Natural killer cell (primary cell): ENCODE measurements at regions of chr9 and their contacts with region 1.

Region 1: GRCh38 chr9:5843794-5844504 is 11.0 kb upstream of the ERMP1 start:
- DNase-seq: peak in 1 of 2 donors; percentile 31
- ATAC-seq: peak in 1 of 3 donors; percentile 27
- H3K4me3 ChIP-seq: no peak overlapping the region
- H3K4me3 Mint-ChIP-seq: peak overlapping the region; percentile 79
- H3K27ac ChIP-seq: peak overlapping the region; percentile 54
- H3K27ac Mint-ChIP-seq: peak overlapping the region; percentile 91
- H3K4me1 ChIP-seq: peaks cover 73% of the 10 kb centered on the region
- H3K4me1 Mint-ChIP-seq: peaks cover 78 to 85% of the 10 kb centered on the region in 2 donors
- H3K27me3 ChIP-seq: no peaks in the 10 kb centered on the region
- H3K27me3 Mint-ChIP-seq: no peaks in the 10 kb centered on the region
- CTCF ChIP-seq: no peak

Region 2: DNA sequence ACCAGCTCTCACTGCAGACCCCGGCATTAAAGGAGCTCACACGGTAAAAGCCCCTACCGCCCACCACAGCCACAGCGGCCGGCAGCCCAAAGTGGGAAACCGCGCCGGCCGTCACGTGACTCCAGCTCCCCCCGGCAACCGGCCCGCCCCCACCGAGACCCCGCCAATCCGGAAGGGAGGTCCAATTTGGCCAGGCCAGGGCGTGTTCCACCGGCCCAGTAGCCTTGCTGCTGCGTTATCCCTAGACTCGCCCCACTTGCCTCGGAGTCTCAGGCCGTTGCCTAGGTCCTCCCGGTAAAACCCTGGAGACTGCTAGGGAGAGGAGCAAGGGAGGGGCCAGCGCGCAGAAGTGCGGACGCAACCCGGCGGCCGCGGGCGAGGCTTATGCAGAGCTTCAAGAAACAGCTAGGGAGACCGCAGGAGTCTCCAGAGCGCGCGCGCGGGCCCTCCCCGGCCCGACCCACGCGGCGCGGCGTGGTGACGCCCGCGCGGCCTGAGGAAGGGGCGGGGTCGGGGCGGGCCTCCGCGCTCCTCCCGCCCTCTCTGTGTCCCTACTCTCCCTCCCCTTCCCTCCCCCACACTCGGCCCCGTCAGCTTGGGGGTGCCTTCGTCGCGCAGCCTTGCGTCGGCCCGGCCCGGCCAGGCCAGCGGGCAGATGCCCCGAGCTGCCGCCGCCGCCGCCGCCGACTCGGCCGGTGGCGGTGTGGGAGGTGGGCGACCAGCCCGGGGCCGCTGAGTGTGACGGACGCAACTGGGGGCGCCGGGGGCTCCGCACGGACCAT is 215.2 kb before region 1 on chr9 and contains the start of gene RIC1:
- intact Hi-C with region 1: loop called (anchors 5 kb)
- DNase-seq: peak; percentile 89 to 94
- ATAC-seq: peak; percentile 87 to 97 (median 88)
- H3K4me3 ChIP-seq: peak within 1 kb of the TSS; percentile 99
- H3K4me3 Mint-ChIP-seq: peak within 1 kb of the TSS; percentile 99
- H3K27ac ChIP-seq: peak within 1 kb of the TSS; percentile 92
- H3K27ac Mint-ChIP-seq: peak within 1 kb of the TSS; percentile 93
- H3K4me1 ChIP-seq: peaks cover 27% of the 10 kb centered on the region
- H3K4me1 Mint-ChIP-seq: peaks cover 49 to 57% of the 10 kb centered on the region in 2 donors
- H3K27me3 ChIP-seq: no peaks in the 10 kb centered on the region
- H3K27me3 Mint-ChIP-seq: no peaks in the 10 kb centered on the region
- CTCF ChIP-seq: no peak
- total RNA-seq, gene RIC1: 23.5 to 33.9 (median 31.8) TPM

Region 3: GRCh38 chr9:5773324-5773999 is 70.5 kb before region 1 on chr9:
- intact Hi-C with region 1: no loop called
- DNase-seq: peak in 1 of 2 donors; percentile 9
- ATAC-seq: no peak
- H3K4me3 ChIP-seq: no peak overlapping the region
- H3K4me3 Mint-ChIP-seq: no peak overlapping the region
- H3K27ac ChIP-seq: no peak overlapping the region
- H3K27ac Mint-ChIP-seq: peak overlapping the region; percentile 2 to 10
- H3K4me1 ChIP-seq: no peaks in the 10 kb centered on the region
- H3K4me1 Mint-ChIP-seq: peaks cover 4 to 14% of the 10 kb centered on the region in 2 donors
- H3K27me3 ChIP-seq: no peaks in the 10 kb centered on the region
- H3K27me3 Mint-ChIP-seq: no peaks in the 10 kb centered on the region
- CTCF ChIP-seq: no peak

Region 4: GRCh38 chr9:5879419-5880181 is 35.7 kb after region 1 on chr9:
- intact Hi-C with region 1: loop called (anchors 5 kb)
- DNase-seq: no peak
- ATAC-seq: peak in 1 of 3 donors; percentile 50
- H3K4me3 ChIP-seq: no peak overlapping the region
- H3K4me3 Mint-ChIP-seq: no peak overlapping the region
- H3K27ac ChIP-seq: no peak overlapping the region
- H3K27ac Mint-ChIP-seq: no peak overlapping the region
- H3K4me1 ChIP-seq: peaks cover 17% of the 10 kb centered on the region
- H3K4me1 Mint-ChIP-seq: peaks cover 25 to 28% of the 10 kb centered on the region in 2 donors
- H3K27me3 ChIP-seq: no peaks in the 10 kb centered on the region
- H3K27me3 Mint-ChIP-seq: no peaks in the 10 kb centered on the region
- CTCF ChIP-seq: no peak

Region 5: DNA sequence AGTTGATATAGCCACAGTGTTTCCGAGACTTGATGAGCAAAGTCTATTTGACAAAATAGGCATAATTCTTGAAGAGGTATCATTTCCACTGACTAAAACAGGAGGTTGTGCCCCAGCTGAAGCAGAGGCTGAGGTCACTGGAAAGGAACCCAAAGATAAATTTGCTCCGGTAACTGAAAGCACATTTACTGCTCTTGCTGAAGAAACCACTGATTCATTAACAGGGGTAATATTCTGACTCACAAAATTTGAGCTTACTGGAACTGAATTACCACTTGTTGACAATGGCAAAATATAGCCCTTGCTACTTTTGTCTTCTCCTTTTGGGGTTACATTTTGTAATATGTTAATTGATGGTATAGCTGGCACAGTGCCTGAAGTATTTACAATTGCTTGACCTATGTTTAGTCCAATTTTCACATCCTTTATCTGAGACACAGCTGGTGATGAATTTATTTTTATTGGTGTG is 76.9 kb after region 1 on chr9:
- intact Hi-C with region 1: loop called (anchors 5 kb)
- DNase-seq: no peak
- ATAC-seq: peak in 1 of 3 donors; percentile 25
- H3K4me3 ChIP-seq: no peak overlapping the region
- H3K4me3 Mint-ChIP-seq: peak overlapping the region; percentile 73
- H3K27ac ChIP-seq: no peak overlapping the region
- H3K27ac Mint-ChIP-seq: peak overlapping the region; percentile 77 to 81
- H3K4me1 ChIP-seq: peaks cover 19% of the 10 kb centered on the region
- H3K4me1 Mint-ChIP-seq: peaks cover 45 to 46% of the 10 kb centered on the region in 2 donors
- H3K27me3 ChIP-seq: no peaks in the 10 kb centered on the region
- H3K27me3 Mint-ChIP-seq: no peaks in the 10 kb centered on the region
- CTCF ChIP-seq: no peak

Region 6: DNA sequence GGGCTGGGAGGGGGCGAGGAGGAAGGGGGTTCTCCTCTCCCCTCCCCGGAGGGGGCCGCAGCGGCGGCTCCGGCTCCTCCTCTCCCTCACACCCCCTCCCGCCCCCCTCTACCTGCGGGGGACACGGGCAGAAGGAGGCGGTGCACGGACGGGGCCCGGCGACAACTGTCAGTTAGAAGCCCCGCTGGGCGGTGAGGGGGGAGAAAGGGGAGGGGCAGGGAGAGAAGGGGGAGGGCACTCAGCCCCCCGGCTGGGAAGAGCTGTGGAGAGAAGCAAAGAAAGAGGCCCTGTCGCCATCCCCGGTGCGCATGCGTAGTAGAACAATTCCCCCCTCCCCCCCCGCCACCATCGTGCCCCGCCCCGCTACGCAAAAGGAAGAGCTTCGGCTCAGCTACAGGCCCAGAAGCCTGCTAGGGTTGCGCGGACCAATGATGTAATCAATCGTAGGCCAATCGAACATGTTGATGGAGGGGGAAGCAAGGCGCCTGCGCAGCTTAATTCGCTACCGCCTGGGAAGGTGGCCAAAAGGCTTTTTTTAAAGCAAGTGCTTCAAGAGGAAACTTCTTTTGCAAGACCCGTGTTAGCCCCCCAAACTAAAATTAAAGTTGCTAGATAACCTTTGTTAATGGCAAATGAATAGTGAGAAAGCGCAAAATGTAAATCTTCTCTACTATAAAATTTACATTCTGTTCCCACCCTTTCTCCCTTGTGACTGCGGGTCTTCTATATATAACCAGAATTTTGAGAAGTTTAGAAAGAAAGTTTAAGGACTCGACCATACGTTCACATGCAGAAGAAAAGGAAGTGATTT is 164.4 kb after region 1 on chr9:
- intact Hi-C with region 1: loop called (anchors 5 kb)
- DNase-seq: peak; percentile 85 to 99
- ATAC-seq: peak; percentile 77 to 89 (median 79)
- H3K4me3 ChIP-seq: peak overlapping the region; percentile 84
- H3K4me3 Mint-ChIP-seq: peak overlapping the region; percentile 81
- H3K27ac ChIP-seq: peak overlapping the region; percentile 92
- H3K27ac Mint-ChIP-seq: peak overlapping the region; percentile 92 to 93
- H3K4me1 ChIP-seq: peaks cover 7% of the 10 kb centered on the region
- H3K4me1 Mint-ChIP-seq: peaks cover 46 to 58% of the 10 kb centered on the region in 2 donors
- H3K27me3 ChIP-seq: no peaks in the 10 kb centered on the region
- H3K27me3 Mint-ChIP-seq: no peaks in the 10 kb centered on the region
- CTCF ChIP-seq: no peak

Region 7: GRCh38 chr9:6412487-6413364 is 568.8 kb after region 1 on chr9 and contains the start of gene UHRF2:
- intact Hi-C with region 1: loop called (anchors 10 kb)
- DNase-seq: peak; percentile 90 to 99
- ATAC-seq: peak; percentile 90 to 97 (median 92)
- H3K4me3 ChIP-seq: peak within 1 kb of the TSS; percentile 94
- H3K4me3 Mint-ChIP-seq: peak within 1 kb of the TSS; percentile 92
- H3K27ac ChIP-seq: peak within 1 kb of the TSS; percentile 80
- H3K27ac Mint-ChIP-seq: peak within 1 kb of the TSS; percentile 85 to 86
- H3K4me1 ChIP-seq: peaks cover 16% of the 10 kb centered on the region
- H3K4me1 Mint-ChIP-seq: peaks cover 29 to 35% of the 10 kb centered on the region in 2 donors
- H3K27me3 ChIP-seq: no peaks in the 10 kb centered on the region
- H3K27me3 Mint-ChIP-seq: no peaks in the 10 kb centered on the region
- CTCF ChIP-seq: no peak
- total RNA-seq, gene UHRF2: 118 to 130 (median 120) TPM